Heart left ventricle (tissue), 16 donors: ENCODE measurements at regions of chr6 and their contacts with region 1.

Region 1: GRCh38 chr6:170295510-170296422 is 4.9 kb upstream of the DLL1 start:
- DNase-seq: peak in 2 of 5 donors; percentile 23 to 45
- ATAC-seq: peak in 2 of 4 donors; percentile 6 to 22
- H3K4me3 ChIP-seq: peak overlapping the region; percentile 44 to 64 (median 56)
- H3K27ac ChIP-seq: peak overlapping the region in 1 of 12 donors; percentile 8
- H3K4me1 ChIP-seq: peaks cover 11 to 51% (median 36%) of the 10 kb centered on the region in 12 donors
- H3K27me3 ChIP-seq: peaks cover 9 to 75% (median 33%) of the 10 kb centered on the region in 9 donors
- CTCF ChIP-seq: no peak
- POLR2A ChIP-seq: no peak

Region 2: GRCh38 chr6:169959136-169960002 is 336.4 kb before region 1 on chr6:
- intact Hi-C with region 1: loop called in 8 of 10 experiments (anchors 2 to 10 kb)
- DNase-seq: peak in 1 of 5 donors; percentile 27
- ATAC-seq: peak in 2 of 4 donors; percentile 28 to 53
- H3K4me3 ChIP-seq: no peak overlapping the region
- H3K27ac ChIP-seq: no peak overlapping the region
- H3K4me1 ChIP-seq: peaks cover 0 to 15% (median 2%) of the 10 kb centered on the region in 12 donors
- H3K27me3 ChIP-seq: peaks cover 0 to 14% (median 0%) of the 10 kb centered on the region in 9 donors
- CTCF ChIP-seq: peak in 1 of 12 donors; percentile 6
- POLR2A ChIP-seq: no peak

Region 3: DNA sequence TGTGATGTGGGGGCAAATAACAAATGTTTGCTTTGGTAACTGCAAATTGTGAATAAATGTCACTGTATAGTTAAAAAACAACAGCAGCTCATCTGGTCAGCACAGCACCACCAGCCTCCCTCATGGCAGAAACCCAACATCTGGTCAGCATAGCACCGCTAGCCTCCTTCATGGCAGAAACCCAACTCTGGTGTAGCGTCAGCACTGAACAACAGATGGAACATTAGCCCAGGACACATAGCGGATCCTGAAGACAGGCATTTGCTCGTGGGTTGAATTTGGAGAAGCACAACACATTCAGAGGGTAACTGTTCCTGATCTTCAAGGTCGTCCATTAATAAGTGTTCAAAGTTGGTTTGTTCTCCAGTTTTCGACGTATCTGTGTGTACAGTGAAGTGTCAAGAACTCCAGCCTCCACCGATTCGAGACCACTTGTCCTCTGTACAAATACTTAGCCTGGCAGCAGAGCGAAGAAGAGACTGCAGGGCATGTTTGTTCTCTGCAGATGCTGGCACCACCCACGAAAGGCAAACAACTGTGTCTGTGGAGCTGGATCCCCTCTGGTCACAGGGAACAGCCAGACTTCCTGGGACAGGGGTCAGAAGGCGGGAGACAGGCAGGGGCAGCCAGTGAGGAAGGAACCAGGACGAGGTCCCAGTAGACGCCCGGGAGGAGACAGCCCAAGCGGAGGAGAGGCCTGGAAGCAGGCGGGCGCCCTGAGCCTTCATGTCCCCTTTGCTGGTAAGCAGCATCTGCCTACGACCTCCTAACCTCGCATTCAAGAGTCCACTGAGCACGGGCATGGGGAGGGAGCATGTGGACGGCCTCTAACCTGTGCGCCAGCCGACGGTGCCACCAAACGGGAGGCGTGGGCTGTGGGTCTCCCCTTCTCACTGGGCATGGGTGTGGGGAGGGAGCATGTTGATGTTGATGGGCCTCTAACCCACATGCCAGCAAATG is 270.5 kb before region 1 on chr6:
- intact Hi-C with region 1: loop called in 4 of 10 experiments (anchors 5 to 10 kb)
- DNase-seq: peak in 2 of 5 donors; percentile 41 to 80
- ATAC-seq: peak; percentile 39 to 75 (median 54)
- H3K4me3 ChIP-seq: no peak overlapping the region
- H3K27ac ChIP-seq: peak overlapping the region in 2 of 12 donors; percentile 8 to 55
- H3K4me1 ChIP-seq: peaks cover 0 to 14% (median 3%) of the 10 kb centered on the region in 12 donors
- H3K27me3 ChIP-seq: peaks cover 0 to 13% (median 4%) of the 10 kb centered on the region in 9 donors
- CTCF ChIP-seq: no peak
- POLR2A ChIP-seq: no peak

Region 4: DNA sequence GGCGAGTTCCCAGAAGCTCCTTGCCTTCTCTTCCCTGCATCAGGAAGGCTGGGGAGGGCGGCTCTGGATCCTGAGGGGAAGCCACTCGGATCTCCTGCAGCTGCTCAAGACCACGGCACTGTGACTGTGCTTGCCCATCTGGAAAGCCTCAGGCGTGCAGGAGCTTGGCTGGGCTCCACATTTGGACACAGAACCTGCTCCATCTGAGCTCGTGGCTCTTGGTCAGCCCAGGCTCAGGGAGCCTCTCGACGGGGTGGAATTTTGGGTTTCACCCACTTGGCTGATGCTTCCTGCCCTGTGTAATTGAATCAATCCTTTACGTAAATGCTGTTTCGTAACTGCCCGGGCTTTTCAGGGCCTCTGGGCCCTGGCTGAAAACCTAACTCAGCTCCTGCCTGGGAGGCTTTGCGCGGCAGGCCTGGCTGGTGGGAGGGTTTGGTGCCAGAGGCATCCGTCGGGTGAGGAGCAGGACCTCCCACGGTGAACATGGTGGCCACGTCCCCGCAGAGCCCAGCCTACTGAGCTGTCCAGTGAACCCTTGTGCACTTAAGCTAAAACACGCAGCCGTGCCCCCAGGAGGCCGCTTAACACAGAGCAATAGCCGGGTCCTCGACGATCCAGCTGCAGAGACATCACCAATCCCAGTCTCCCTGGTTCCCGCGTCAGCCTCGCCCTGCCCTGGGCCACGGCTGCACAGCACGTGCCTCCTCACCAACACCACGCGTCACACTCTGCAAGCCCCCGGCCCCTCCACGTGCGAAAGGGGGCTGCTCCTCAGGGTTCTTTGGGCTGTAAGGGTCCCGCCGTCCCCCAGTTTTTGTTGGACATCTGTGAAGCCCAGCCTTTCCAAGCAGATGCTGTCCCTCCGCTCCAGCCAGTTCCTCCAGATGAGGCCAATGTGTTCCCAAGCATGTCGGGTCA is 245.9 kb before region 1 on chr6:
- intact Hi-C with region 1: loop called in 3 of 10 experiments (anchors 10 kb)
- DNase-seq: peak; percentile 70 to 94 (median 88)
- ATAC-seq: peak; percentile 83 to 91 (median 91)
- H3K4me3 ChIP-seq: no peak overlapping the region
- H3K27ac ChIP-seq: peak overlapping the region in 11 of 12 donors; percentile 10 to 88 (median 57)
- H3K4me1 ChIP-seq: peaks cover 0 to 36% (median 10%) of the 10 kb centered on the region in 12 donors
- H3K27me3 ChIP-seq: no peaks in the 10 kb centered on the region
- CTCF ChIP-seq: no peak
- POLR2A ChIP-seq: no peak

Region 5: DNA sequence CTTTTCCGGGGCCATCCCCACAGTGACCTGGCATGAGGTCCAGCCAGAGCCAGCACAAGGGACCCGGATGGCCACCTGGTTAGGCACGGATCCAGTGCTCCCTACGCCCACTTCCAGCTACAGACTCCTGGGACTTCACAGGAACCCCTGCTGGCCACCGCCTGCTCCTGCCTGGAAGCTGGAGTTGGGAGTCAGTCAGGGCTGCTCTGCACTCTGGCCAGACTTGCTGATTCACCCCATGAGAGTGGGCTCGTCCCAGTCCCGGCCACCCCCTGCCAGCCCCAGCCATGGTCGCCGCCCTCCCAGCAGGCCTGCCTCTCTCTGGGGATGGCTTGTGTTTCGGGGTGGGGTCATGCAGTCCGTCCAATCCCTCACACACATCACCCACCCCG is 130.7 kb before region 1 on chr6:
- intact Hi-C with region 1: loop called in 1 of 10 experiments (anchors 5 kb)
- DNase-seq: peak; percentile 63 to 79 (median 69)
- ATAC-seq: peak; percentile 29 to 85 (median 70)
- H3K4me3 ChIP-seq: no peak overlapping the region
- H3K27ac ChIP-seq: peak overlapping the region in 9 of 12 donors; percentile 14 to 72 (median 59)
- H3K4me1 ChIP-seq: peaks cover 0 to 34% (median 23%) of the 10 kb centered on the region in 12 donors
- H3K27me3 ChIP-seq: no peaks in the 10 kb centered on the region
- CTCF ChIP-seq: peak in 10 of 12 donors; percentile 16 to 48 (median 30)
- POLR2A ChIP-seq: no peak

Region 6: DNA sequence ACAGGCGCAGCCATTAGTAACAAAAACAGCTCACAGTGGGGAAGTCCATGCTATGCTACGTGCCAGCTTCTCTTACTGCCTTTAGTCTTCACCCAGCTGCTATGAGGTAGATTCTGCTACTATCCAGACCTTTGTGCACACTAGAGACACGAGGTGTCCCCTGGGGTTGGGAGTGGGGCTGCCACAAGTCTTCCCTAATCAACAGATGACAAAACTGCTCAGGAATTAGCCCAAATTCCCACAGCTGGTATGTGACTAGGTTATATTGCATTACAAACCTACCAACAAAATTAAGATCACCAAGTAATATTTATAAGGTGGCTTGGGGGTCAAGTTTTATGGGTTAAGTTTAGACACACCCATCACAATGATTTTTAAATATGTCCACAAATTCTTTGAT is 194.1 kb after region 1 on chr6:
- intact Hi-C with region 1: no loop called
- DNase-seq: no peak
- ATAC-seq: no peak
- H3K4me3 ChIP-seq: no peak overlapping the region
- H3K27ac ChIP-seq: no peak overlapping the region
- H3K4me1 ChIP-seq: no peaks in the 10 kb centered on the region
- H3K27me3 ChIP-seq: no peaks in the 10 kb centered on the region
- CTCF ChIP-seq: no peak
- POLR2A ChIP-seq: no peak

Region 7: DNA sequence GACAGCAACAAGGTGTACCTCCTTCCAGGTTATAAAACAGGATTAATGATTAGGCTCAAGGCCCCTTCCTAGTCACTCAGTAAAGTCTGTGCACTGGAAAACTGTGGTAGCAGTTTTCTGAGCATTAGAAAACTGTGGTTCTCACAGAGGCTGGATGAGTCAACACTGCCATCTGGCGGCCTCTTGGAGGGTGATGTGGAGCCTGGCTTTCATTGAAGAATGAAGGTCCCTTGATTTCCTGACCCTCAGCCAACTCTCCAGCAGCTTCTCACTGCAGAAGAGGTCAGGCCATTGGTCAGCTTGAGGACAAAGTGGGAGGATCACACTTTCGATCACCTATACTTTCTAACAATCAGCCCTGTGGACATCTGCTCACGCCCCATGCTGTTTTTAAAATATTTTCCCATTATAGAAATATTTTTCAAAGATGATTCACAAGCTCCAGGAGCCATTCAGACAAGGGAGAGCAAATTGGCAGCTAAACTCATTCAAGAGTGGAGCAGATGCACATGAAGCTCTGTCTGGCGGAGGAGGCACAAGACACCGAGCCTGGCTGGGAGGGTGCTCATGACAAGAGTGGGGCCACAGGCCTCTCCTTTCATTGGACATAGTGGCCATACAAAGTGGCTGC is 234.2 kb after region 1 on chr6:
- intact Hi-C with region 1: loop called in 6 of 10 experiments (anchors 5 to 10 kb)
- DNase-seq: peak; percentile 74 to 80 (median 77)
- ATAC-seq: peak; percentile 45 to 86 (median 86)
- H3K4me3 ChIP-seq: no peak overlapping the region
- H3K27ac ChIP-seq: peak overlapping the region in 1 of 12 donors; percentile 34
- H3K4me1 ChIP-seq: peaks cover 0 to 4% (median 0%) of the 10 kb centered on the region in 12 donors
- H3K27me3 ChIP-seq: no peaks in the 10 kb centered on the region
- CTCF ChIP-seq: peak; percentile 79 to 93 (median 86)
- POLR2A ChIP-seq: no peak